ENCODE measurements at regions of chr17 and their contacts with region 1.

Region 1: DNA sequence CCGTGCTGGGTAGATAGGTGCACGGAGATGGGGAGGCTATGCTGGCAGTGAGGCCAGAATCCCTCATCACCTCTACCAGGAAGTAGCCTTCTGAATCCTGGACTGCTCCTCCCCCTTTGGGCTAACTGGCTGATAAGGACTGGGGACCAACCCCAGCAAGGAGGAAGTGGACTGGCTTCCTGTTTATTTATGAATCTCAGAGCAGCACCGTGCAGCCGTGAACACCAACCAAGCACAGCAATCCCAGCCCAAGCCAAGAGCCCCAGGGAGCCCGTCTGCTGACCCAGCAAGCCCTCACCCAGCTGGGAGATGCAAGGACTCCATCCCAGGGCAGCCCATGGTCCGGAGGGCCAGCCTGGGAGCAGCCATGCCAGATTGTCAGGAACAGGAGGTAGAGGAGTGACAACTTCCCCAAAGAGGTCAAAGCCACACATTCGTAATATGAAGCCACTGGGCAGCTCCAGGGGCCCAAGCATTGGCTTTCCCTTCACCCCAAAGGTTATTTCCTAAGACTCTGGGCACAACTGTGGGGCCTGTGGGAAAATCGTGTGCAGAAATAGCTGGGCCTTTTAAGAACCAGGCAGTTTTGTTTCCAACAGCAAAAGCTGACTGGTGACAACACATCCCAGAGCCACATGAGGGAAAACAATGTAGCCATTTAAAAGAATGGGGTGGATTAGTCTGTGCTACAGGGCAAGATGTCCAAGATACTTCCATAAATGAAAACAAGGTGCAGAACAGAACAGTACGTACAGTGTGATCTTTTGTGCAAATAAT is 23.9 kb downstream of the PHB1 start:
- DNase-seq: no peak
- ATAC-seq: no peak
- H3K4me3 ChIP-seq: no peak overlapping the region
- H3K27ac ChIP-seq: peak overlapping the region in 1 of 4 donors; percentile 47
- H3K4me1 ChIP-seq: peaks cover 12 to 15% of the 10 kb centered on the region in 2 donors
- H3K27me3 ChIP-seq: no peaks in the 10 kb centered on the region
- CTCF ChIP-seq: no peak
- POLR2A ChIP-seq: no peak

Region 2: GRCh38 chr17:49361902-49362722 is 28.6 kb before region 1 on chr17 and contains the start of gene ZNF652:
- in situ Hi-C with region 1: no loop called
- intact Hi-C with region 1: loop called (anchors 2 kb)
- DNase-seq: peak; percentile 78 to 86
- ATAC-seq: peak; percentile 87 to 89
- H3K4me3 ChIP-seq: peak within 1 kb of the TSS; percentile 88 to 97 (median 92)
- H3K27ac ChIP-seq: peak within 1 kb of the TSS; percentile 80 to 92 (median 84)
- H3K4me1 ChIP-seq: peaks cover 29 to 33% of the 10 kb centered on the region in 2 donors
- H3K27me3 ChIP-seq: no peaks in the 10 kb centered on the region
- CTCF ChIP-seq: no peak
- POLR2A ChIP-seq: peak; percentile 21 to 43
- total RNA-seq, gene ZNF652: 32.8 to 49.6 (median 41.1) TPM